ENCODE measurements at regions of chr20 and their contacts with region 1.

Region 1: DNA sequence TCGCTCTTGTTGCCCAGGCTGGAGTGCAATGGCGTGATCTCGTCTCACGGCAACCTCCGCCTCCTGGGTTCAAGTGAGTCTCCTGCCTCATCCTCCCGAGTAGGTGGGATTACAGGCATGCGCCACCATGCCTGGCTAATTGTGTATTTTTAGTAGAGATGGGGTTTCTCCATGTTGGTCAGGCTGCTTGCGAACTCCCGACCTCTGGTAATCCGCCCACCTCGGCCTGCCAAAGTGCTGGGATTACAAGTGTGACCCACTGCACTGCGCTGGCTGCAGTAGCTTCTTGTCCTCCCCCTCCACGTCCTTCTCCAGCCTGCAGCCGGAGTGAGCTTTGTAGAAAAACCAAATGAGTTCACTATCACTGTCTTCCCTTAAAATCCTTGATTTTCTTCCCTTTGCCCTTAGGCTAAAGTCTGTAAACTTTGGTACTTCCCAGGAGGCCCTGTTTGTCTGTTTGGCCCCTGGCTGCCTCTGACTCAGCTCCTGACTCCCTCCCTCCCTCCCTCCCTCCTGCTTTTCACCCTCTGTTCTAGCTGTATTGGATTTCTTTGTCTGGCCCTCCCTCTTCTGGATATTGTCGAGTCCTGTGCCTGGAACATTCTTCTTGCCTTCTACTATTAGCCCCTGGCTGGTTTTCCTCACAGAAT is 12.9 kb downstream of the PARD6B start:
- DNase-seq: peak; percentile 90 to 98
- H3K4me3 ChIP-seq: peak overlapping the region; percentile 8
- H3K4me3 Mint-ChIP-seq: peak overlapping the region; percentile 60
- H3K27ac Mint-ChIP-seq: peak overlapping the region; percentile 76
- H3K4me1 ChIP-seq: peaks cover 93% of the 10 kb centered on the region
- H3K4me1 Mint-ChIP-seq: peaks cover 75% of the 10 kb centered on the region
- H3K27me3 ChIP-seq: no peaks in the 10 kb centered on the region
- H3K27me3 Mint-ChIP-seq: no peaks in the 10 kb centered on the region
- CTCF ChIP-seq: peak; percentile 62 to 75

Region 2: GRCh38 chr20:50625986-50626677 is 118.1 kb before region 1 on chr20:
- CTCF ChIA-PET with region 1: interaction called, 65 read pairs
- POLR2A ChIA-PET with region 1: interaction called, 4 read pairs
- intact Hi-C with region 1: loop called (anchors 1 kb)
- DNase-seq: peak; percentile 85 to 91
- H3K4me3 ChIP-seq: no peak overlapping the region
- H3K4me3 Mint-ChIP-seq: no peak overlapping the region
- H3K27ac Mint-ChIP-seq: peak overlapping the region; percentile 23
- H3K4me1 ChIP-seq: peaks cover 41% of the 10 kb centered on the region
- H3K4me1 Mint-ChIP-seq: peaks cover 12% of the 10 kb centered on the region
- H3K27me3 ChIP-seq: no peaks in the 10 kb centered on the region
- H3K27me3 Mint-ChIP-seq: no peaks in the 10 kb centered on the region
- CTCF ChIP-seq: peak; percentile 96 to 97

Region 3: GRCh38 chr20:50670126-50670862 is 74.0 kb before region 1 on chr20:
- CTCF ChIA-PET with region 1: interaction called, 87 read pairs
- POLR2A ChIA-PET with region 1: interaction called, 16 read pairs
- intact Hi-C with region 1: no loop called
- DNase-seq: peak; percentile 86 to 89
- H3K4me3 ChIP-seq: no peak overlapping the region
- H3K4me3 Mint-ChIP-seq: no peak overlapping the region
- H3K27ac Mint-ChIP-seq: peak overlapping the region; percentile 71
- H3K4me1 ChIP-seq: peaks cover 82% of the 10 kb centered on the region
- H3K4me1 Mint-ChIP-seq: peaks cover 76% of the 10 kb centered on the region
- H3K27me3 ChIP-seq: no peaks in the 10 kb centered on the region
- H3K27me3 Mint-ChIP-seq: no peaks in the 10 kb centered on the region
- CTCF ChIP-seq: no peak

Region 4: GRCh38 chr20:50701551-50701963 is 42.7 kb before region 1 on chr20:
- CTCF ChIA-PET with region 1: interaction called, 10 read pairs
- POLR2A ChIA-PET with region 1: interaction called, 3 read pairs
- intact Hi-C with region 1: loop called (anchors 1 kb)
- DNase-seq: no peak
- H3K4me3 ChIP-seq: no peak overlapping the region
- H3K4me3 Mint-ChIP-seq: no peak overlapping the region
- H3K27ac Mint-ChIP-seq: peak overlapping the region; percentile 88
- H3K4me1 ChIP-seq: peaks cover 41% of the 10 kb centered on the region
- H3K4me1 Mint-ChIP-seq: peaks cover 46% of the 10 kb centered on the region
- H3K27me3 ChIP-seq: no peaks in the 10 kb centered on the region
- H3K27me3 Mint-ChIP-seq: no peaks in the 10 kb centered on the region
- CTCF ChIP-seq: no peak

Region 5: GRCh38 chr20:50724851-50725721 is 19.2 kb before region 1 on chr20:
- CTCF ChIA-PET with region 1: interaction called, 53 read pairs
- POLR2A ChIA-PET with region 1: interaction called, 19 read pairs
- intact Hi-C with region 1: no loop called
- DNase-seq: peak; percentile 81 to 92
- H3K4me3 ChIP-seq: no peak overlapping the region
- H3K4me3 Mint-ChIP-seq: no peak overlapping the region
- H3K27ac Mint-ChIP-seq: no peak overlapping the region
- H3K4me1 ChIP-seq: peaks cover 70% of the 10 kb centered on the region
- H3K4me1 Mint-ChIP-seq: peaks cover 30% of the 10 kb centered on the region
- H3K27me3 ChIP-seq: no peaks in the 10 kb centered on the region
- H3K27me3 Mint-ChIP-seq: no peaks in the 10 kb centered on the region
- CTCF ChIP-seq: no peak

Region 6: GRCh38 chr20:50731055-50731871 is 13.0 kb before region 1 on chr20 and contains the start of gene PARD6B:
- CTCF ChIA-PET with region 1: interaction called, 53 read pairs
- POLR2A ChIA-PET with region 1: interaction called, 19 read pairs
- intact Hi-C with region 1: loop called (anchors 1 kb)
- DNase-seq: peak; percentile 100
- H3K4me3 ChIP-seq: peak within 1 kb of the TSS; percentile 78
- H3K4me3 Mint-ChIP-seq: peak within 1 kb of the TSS; percentile 88
- H3K27ac Mint-ChIP-seq: peak within 1 kb of the TSS; percentile 96
- H3K4me1 ChIP-seq: peaks cover 67% of the 10 kb centered on the region
- H3K4me1 Mint-ChIP-seq: peaks cover 46% of the 10 kb centered on the region
- H3K27me3 ChIP-seq: no peaks in the 10 kb centered on the region
- H3K27me3 Mint-ChIP-seq: no peaks in the 10 kb centered on the region
- CTCF ChIP-seq: peak in 1 of 2 experiments; percentile 19
- total RNA-seq, gene PARD6B: 153 and 156 TPM in 2 replicates

Region 7: DNA sequence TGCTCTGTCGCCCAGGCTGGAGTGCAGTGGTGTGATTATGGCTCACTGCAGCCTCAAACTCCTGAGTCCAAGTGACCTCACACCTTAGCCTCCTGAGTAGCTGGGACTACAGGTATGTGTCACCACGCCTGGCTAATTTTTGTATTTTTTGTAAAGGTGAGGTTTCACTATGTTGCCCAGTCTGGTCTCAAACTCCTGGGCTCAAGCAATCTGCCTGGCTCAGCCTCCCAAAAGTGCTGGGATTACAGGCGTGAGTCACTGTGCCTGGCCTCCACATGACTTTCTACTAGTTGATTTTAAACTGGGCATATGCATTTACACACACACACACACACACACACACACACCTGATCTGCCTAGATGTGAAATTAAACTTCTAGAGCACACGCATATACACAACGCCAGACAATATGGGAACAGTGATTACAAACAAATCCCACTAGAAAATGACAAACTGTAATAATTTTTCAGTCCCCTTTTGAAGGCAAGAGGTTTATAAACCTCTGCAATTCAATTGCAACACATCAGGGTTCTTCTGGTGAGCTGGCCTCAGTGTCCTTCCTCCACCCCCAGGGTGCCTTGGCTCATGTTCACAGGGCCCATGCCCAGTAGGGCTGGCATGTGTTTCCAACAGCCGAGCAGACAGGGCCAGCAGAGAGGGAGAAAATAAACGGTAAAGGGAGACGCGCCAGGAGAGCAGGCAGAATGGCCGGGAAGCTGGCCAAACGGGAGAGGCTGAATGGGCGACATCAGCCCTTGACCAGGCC is 18.4 kb after region 1 on chr20:
- CTCF ChIA-PET with region 1: interaction called, 18 read pairs
- POLR2A ChIA-PET with region 1: interaction called, 9 read pairs
- intact Hi-C with region 1: loop called (anchors 1 kb)
- DNase-seq: peak; percentile 54 to 72
- H3K4me3 ChIP-seq: no peak overlapping the region
- H3K4me3 Mint-ChIP-seq: peak overlapping the region; percentile 78
- H3K27ac Mint-ChIP-seq: peak overlapping the region; percentile 100
- H3K4me1 ChIP-seq: peaks cover 87% of the 10 kb centered on the region
- H3K4me1 Mint-ChIP-seq: peaks cover 82% of the 10 kb centered on the region
- H3K27me3 ChIP-seq: no peaks in the 10 kb centered on the region
- H3K27me3 Mint-ChIP-seq: no peaks in the 10 kb centered on the region
- CTCF ChIP-seq: no peak

Measured in Caco-2 (cell line).